H1 (cell line): ENCODE measurements at regions of chr4 and their contacts with region 1.

Region 1: GRCh38 chr4:84482564-84483563 is 16.2 kb downstream of the NKX6-1 start:
- DNase-seq: peak in 1 of 2 experiments; percentile 97
- H3K4me3 ChIP-seq: peak overlapping the region in 3 of 4 experiments; percentile 1 to 52 (median 21); a peak in 5 of 8 replicates
- H3K27ac ChIP-seq: no peak overlapping the region
- H3K4me1 ChIP-seq: peaks cover 0 to 10% (median 5%) of the 10 kb centered on the region in 4 experiments; a peak in 5 of 7 replicates
- H3K27me3 ChIP-seq: peaks cover 55 to 89% (median 76%) of the 10 kb centered on the region in 4 experiments
- CTCF ChIP-seq: peak; percentile 98 to 100 (median 100)
- EP300 ChIP-seq: no peak
- POLR2A ChIP-seq: no peak
- RAD21 ChIP-seq: peak; percentile 57 to 70

Region 2: GRCh38 chr4:84470204-84470785 is 12.6 kb before region 1 on chr4:
- CTCF ChIA-PET with region 1: interaction called, 64 read pairs
- POLR2A ChIA-PET with region 1: interaction called, 3 read pairs
- DNase-seq: no peak
- H3K4me3 ChIP-seq: no peak overlapping the region
- H3K27ac ChIP-seq: no peak overlapping the region
- H3K4me1 ChIP-seq: no peaks in the 10 kb centered on the region
- H3K27me3 ChIP-seq: no peaks in the 10 kb centered on the region
- CTCF ChIP-seq: peak; percentile 64 to 78 (median 65)
- EP300 ChIP-seq: no peak
- POLR2A ChIP-seq: no peak
- RAD21 ChIP-seq: peak; percentile 63 to 71

Region 3: GRCh38 chr4:84493092-84493850 is 10.4 kb after region 1 on chr4:
- CTCF ChIA-PET with region 1: interaction called, 69 read pairs
- POLR2A ChIA-PET with region 1: interaction called, 4 read pairs
- DNase-seq: peak in 1 of 2 experiments; percentile 80
- H3K4me3 ChIP-seq: peak overlapping the region; percentile 15 to 59 (median 36); a peak in 5 of 8 replicates
- H3K27ac ChIP-seq: no peak overlapping the region
- H3K4me1 ChIP-seq: peaks cover 9 to 26% (median 19%) of the 10 kb centered on the region in 4 experiments
- H3K27me3 ChIP-seq: peaks cover 69 to 100% (median 92%) of the 10 kb centered on the region in 4 experiments
- CTCF ChIP-seq: no peak
- EP300 ChIP-seq: no peak
- POLR2A ChIP-seq: no peak
- RAD21 ChIP-seq: peak; percentile 12 to 31; a peak in 3 of 4 replicates

Region 4: DNA sequence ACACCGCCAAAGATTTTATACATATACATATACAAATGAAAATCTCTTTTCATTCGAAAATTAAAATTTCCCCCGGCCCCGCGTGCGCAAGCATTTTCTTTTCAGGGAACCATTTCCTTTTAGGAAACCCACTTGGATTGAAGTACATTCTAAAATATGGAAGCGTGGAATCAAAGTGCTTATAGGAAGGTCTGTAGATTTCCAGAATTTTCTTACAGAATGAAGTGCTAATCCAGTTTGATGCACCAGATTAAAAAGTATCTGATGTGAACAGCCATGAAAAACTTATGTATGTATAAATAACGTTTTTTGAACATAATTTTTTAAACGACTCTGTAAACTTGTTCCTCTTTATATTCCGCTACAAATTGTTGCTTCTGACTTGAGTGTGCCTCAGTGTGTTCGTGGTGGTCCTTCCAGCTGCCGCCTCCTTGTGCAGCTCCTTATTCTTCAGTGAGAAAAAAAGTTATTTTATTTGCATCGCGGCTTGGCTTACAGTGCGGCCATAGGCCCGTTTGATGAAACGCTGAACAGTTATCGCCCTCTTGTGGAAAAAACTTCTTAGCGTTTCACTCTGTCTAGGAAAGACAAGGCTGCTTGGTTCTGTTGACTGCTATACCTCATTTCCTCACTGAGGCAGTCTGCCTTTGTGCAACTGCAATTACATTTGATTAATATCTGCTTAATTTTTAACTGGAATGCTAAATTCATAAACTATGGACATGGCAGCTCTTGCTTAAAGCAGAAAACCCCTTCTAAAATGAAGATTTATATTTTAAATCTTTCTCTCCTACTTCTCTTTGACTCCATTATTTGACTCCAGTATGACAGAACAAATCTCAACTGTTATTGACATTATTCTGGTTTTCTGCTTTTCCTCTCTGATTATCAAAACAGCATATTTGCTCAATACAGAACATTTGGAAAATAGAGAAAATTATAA is 20.9 kb after region 1 on chr4:
- CTCF ChIA-PET with region 1: interaction called, 83 read pairs
- POLR2A ChIA-PET with region 1: interaction called, 5 read pairs
- DNase-seq: no peak
- H3K4me3 ChIP-seq: 0 out of 8 replicates have a peak overlapping the region, but pooled peaks of 1 of the 4 experiments have one; percentile 19
- H3K27ac ChIP-seq: no peak overlapping the region
- H3K4me1 ChIP-seq: peaks cover 3 to 19% (median 9%) of the 10 kb centered on the region in 4 experiments
- H3K27me3 ChIP-seq: peaks cover 40 to 52% (median 47%) of the 10 kb centered on the region in 4 experiments
- CTCF ChIP-seq: peak in 2 of 3 experiments; percentile 82; a peak in 3 of 4 replicates
- EP300 ChIP-seq: no peak
- POLR2A ChIP-seq: no peak
- RAD21 ChIP-seq: peak; percentile 92 to 93